WTC11 (cell line): ENCODE measurements at regions of chr6 and their contacts with region 1.

Region 1: DNA sequence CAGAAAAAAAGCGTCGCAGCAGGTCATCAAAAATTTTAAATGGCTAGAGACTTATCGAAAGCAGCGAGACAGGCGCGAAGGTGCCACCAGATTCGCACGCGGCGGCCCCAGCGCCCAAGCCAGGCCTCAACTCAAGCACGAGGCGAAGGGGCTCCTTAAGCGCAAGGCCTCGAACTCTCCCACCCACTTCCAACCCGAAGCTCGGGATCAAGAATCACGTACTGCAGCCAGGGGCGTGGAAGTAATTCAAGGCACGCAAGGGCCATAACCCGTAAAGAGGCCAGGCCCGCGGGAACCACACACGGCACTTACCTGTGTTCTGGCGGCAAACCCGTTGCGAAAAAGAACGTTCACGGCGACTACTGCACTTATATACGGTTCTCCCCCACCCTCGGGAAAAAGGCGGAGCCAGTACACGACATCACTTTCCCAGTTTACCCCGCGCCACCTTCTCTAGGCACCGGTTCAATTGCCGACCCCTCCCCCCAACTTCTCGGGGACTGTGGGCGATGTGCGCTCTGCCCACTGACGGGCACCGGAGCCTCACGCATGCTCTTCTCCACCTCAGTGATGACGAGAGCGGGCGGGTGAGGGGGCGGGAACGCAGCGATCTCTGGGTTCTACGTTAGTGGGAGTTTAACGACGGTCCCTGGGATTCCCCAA is at the start of gene EEF1A1:
- DNase-seq: peak; percentile 99
- ATAC-seq: peak; percentile 89
- H3K4me3 Mint-ChIP-seq: peak within 1 kb of the TSS; percentile 98
- H3K27ac Mint-ChIP-seq: peak within 1 kb of the TSS; percentile 100
- H3K4me1 Mint-ChIP-seq: peaks cover 55% of the 10 kb centered on the region
- H3K27me3 Mint-ChIP-seq: peaks cover 12% of the 10 kb centered on the region
- CTCF ChIP-seq: no peak
- total RNA-seq, gene EEF1A1: 11,564 to 13,111 TPM (median 12,917 TPM) in 3 replicates

Region 2: GRCh38 chr6:73461537-73462350 is 59.1 kb before region 1 on chr6 and contains the start of gene MTO1:
- CTCF ChIA-PET with region 1: no interaction called
- POLR2A ChIA-PET with region 1: interaction called, 12 read pairs
- DNase-seq: peak; percentile 66
- ATAC-seq: peak; percentile 93
- H3K4me3 Mint-ChIP-seq: peak within 1 kb of the TSS; percentile 98
- H3K27ac Mint-ChIP-seq: peak within 1 kb of the TSS; percentile 97
- H3K4me1 Mint-ChIP-seq: peaks cover 7% of the 10 kb centered on the region; the same call in 1 of the 2 replicates
- H3K27me3 Mint-ChIP-seq: no peaks in the 10 kb centered on the region
- CTCF ChIP-seq: no peak
- total RNA-seq, gene MTO1: 24.1 to 32.4 TPM (median 28.2 TPM) in 3 replicates

Region 3: GRCh38 chr6:73484438-73484837 is 36.4 kb before region 1 on chr6:
- CTCF ChIA-PET with region 1: no interaction called
- POLR2A ChIA-PET with region 1: no interaction called
- DNase-seq: no peak
- ATAC-seq: no peak
- H3K4me3 Mint-ChIP-seq: no peak overlapping the region
- H3K27ac Mint-ChIP-seq: no peak overlapping the region
- H3K4me1 Mint-ChIP-seq: no peaks in the 10 kb centered on the region
- H3K27me3 Mint-ChIP-seq: no peaks in the 10 kb centered on the region
- CTCF ChIP-seq: no peak

Region 4: DNA sequence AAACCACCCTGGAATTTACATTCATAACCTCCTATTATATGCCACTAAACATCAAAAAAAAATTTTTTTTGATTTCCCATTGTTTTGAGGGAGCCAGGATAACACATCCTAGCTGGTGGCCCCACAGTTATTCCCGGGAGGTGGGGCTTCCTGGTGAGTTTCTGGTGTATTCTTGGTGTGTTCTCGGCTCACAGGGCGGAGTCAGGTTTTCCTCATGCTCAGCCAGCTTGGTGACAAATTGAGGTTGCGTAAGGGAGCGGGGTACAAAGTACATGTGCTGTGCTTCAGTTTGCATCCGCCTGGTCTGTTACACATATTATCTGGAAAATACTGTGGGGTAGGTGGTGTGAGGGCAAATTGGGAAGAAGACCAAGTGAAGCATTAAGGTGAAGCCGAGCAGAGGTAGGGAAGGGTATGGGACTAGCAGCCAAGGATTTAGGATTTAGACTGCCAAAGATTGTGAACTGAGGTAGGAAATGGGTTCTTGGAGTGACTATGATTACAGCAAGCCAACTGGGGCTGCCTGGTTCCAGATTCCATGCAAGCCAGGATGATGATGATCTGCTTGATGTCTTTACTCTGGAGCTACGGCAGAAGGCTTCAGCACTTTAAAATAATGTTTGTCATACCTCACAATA is 46.3 kb after region 1 on chr6:
- CTCF ChIA-PET with region 1: interaction called, 3 read pairs
- POLR2A ChIA-PET with region 1: interaction called, 26 read pairs
- DNase-seq: no peak
- ATAC-seq: peak; percentile 8; the same call in 1 of the 2 replicates
- H3K4me3 Mint-ChIP-seq: no peak overlapping the region
- H3K27ac Mint-ChIP-seq: peak overlapping the region; percentile 73
- H3K4me1 Mint-ChIP-seq: peaks cover 32% of the 10 kb centered on the region
- H3K27me3 Mint-ChIP-seq: no peaks in the 10 kb centered on the region
- CTCF ChIP-seq: no peak

Region 5: GRCh38 chr6:73580247-73581149 is 59.7 kb after region 1 on chr6:
- CTCF ChIA-PET with region 1: interaction called, 5 read pairs
- POLR2A ChIA-PET with region 1: interaction called, 33 read pairs
- DNase-seq: peak; percentile 93
- ATAC-seq: peak; percentile 86
- H3K4me3 Mint-ChIP-seq: peak overlapping the region; percentile 57
- H3K27ac Mint-ChIP-seq: peak overlapping the region; percentile 97
- H3K4me1 Mint-ChIP-seq: peaks cover 55% of the 10 kb centered on the region
- H3K27me3 Mint-ChIP-seq: 0 out of 2 replicates have a peak, but pooled peaks cover 3% of the 10 kb centered on the region
- CTCF ChIP-seq: no peak

Region 6: GRCh38 chr6:73585566-73586415 is 65.0 kb after region 1 on chr6:
- CTCF ChIA-PET with region 1: no interaction called
- POLR2A ChIA-PET with region 1: interaction called, 33 read pairs
- DNase-seq: no peak
- ATAC-seq: peak; percentile 75
- H3K4me3 Mint-ChIP-seq: peak overlapping the region; percentile 5; the same call in 1 of the 2 replicates
- H3K27ac Mint-ChIP-seq: peak overlapping the region; percentile 98
- H3K4me1 Mint-ChIP-seq: peaks cover 27% of the 10 kb centered on the region
- H3K27me3 Mint-ChIP-seq: no peaks in the 10 kb centered on the region
- CTCF ChIP-seq: no peak

Region 7: DNA sequence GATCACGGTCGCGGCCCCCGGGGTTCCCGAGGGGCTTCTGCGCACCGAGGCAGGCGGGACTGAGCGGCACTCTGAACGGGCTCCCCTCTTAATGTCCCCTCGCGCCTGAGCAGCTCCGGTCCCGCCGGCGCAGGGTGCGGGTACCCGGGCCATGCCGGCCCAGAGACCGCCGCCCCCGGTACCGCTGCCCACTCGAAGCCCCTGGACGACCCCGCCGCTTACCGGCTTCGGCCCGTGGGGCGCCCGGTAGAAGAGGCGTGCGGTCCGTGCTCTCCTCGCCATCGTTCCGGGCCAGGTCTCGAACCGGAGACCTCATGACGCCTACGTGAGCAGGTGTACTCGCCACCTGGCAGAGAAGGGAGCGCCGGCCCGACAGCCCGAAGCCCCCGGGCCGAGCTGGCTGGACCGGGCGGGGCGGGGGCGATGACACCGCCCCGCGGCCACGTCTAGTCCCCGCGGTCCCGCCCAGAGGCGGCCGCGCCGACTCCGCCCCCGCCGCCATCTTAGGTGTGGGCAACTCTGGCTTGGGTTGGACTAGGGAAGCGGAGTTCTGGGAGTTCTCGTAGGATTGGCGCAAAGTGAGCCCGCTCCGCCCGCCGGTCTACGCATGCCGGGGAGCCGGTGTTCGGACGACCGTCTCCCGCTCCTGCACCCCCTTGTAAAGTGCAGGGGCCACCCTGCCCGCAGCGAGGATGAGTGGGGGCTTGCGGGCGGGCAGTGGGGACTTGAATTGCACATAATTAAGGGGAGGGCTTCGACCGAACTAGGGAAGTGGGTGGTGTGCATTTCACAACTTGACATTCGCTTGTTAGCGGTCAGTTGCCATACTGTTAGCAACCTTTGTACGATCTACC is 133.0 kb after region 1 on chr6 and contains the start of gene SLC17A5:
- CTCF ChIA-PET with region 1: interaction called, 24 read pairs
- POLR2A ChIA-PET with region 1: interaction called, 25 read pairs
- DNase-seq: peak; percentile 95
- ATAC-seq: peak; percentile 94
- H3K4me3 Mint-ChIP-seq: peak within 1 kb of the TSS; percentile 95
- H3K27ac Mint-ChIP-seq: peak within 1 kb of the TSS; percentile 95
- H3K4me1 Mint-ChIP-seq: peaks cover 16% of the 10 kb centered on the region
- H3K27me3 Mint-ChIP-seq: no peaks in the 10 kb centered on the region
- CTCF ChIP-seq: no peak
- total RNA-seq, gene SLC17A5: 8.6 to 9.3 TPM (median 8.9 TPM) in 3 replicates

Region 8: DNA sequence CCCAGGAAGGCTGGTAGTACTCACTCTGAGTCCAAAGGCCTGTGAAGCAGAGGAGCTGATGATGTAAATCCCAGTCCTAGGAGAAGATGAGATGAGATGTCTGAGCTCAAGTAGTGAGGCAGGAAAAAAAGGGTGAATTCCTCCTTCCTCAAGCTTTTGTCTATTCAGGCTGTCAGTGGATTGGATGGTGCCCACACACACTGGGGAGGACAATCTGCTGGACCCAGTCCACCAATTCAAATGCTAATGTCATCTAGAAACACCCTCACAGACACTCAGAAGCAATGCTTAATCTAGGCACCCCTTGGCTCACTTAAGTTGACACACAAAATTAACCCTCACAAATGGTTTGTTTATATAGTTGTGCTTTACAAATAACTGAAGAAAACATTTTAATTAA is 269.8 kb after region 1 on chr6:
- CTCF ChIA-PET with region 1: no interaction called
- POLR2A ChIA-PET with region 1: no interaction called
- DNase-seq: no peak
- ATAC-seq: peak; percentile 83
- H3K4me3 Mint-ChIP-seq: no peak overlapping the region
- H3K27ac Mint-ChIP-seq: no peak overlapping the region
- H3K4me1 Mint-ChIP-seq: peaks cover 25% of the 10 kb centered on the region
- H3K27me3 Mint-ChIP-seq: no peaks in the 10 kb centered on the region
- CTCF ChIP-seq: no peak